ENCODE measurements at regions of chr6 and their contacts with region 1.

Region 1: GRCh38 chr6:89352278-89353117 is at the start of gene UBE2J1:
- DNase-seq: peak; percentile 87
- ATAC-seq: peak; percentile 81
- H3K4me3 ChIP-seq: peak within 1 kb of the TSS; percentile 72 to 99 (median 82)
- H3K4me3 Mint-ChIP-seq: peak within 1 kb of the TSS; percentile 93
- H3K27ac ChIP-seq: peak within 1 kb of the TSS; percentile 83 to 94
- H3K27ac Mint-ChIP-seq: peak within 1 kb of the TSS; percentile 95
- H3K4me1 ChIP-seq: peaks cover 73 to 74% of the 10 kb centered on the region in 2 donors
- H3K4me1 Mint-ChIP-seq: peaks cover 78% of the 10 kb centered on the region
- H3K27me3 ChIP-seq: no peaks in the 10 kb centered on the region
- H3K27me3 Mint-ChIP-seq: no peaks in the 10 kb centered on the region
- CTCF ChIP-seq: no peak
- total RNA-seq, gene UBE2J1: 28.0 and 31.1 TPM in 2 replicates

Region 2: GRCh38 chr6:87472525-87473418 is 1879.7 kb before region 1 on chr6 and contains the start of gene SLC35A1:
- CTCF ChIA-PET with region 1: no interaction called
- POLR2A ChIA-PET with region 1: no interaction called
- intact Hi-C with region 1: loop called (anchors 10 kb)
- DNase-seq: peak; percentile 93
- ATAC-seq: peak; percentile 97
- H3K4me3 ChIP-seq: peak within 1 kb of the TSS; percentile 72 to 95 (median 85)
- H3K4me3 Mint-ChIP-seq: peak within 1 kb of the TSS; percentile 99
- H3K27ac ChIP-seq: peak within 1 kb of the TSS; percentile 85 to 98
- H3K27ac Mint-ChIP-seq: peak within 1 kb of the TSS; percentile 100
- H3K4me1 ChIP-seq: peaks cover 7 to 11% of the 10 kb centered on the region in 2 donors
- H3K4me1 Mint-ChIP-seq: peaks cover 13% of the 10 kb centered on the region
- H3K27me3 ChIP-seq: peaks cover 0 to 7% (median 0%) of the 10 kb centered on the region in 4 experiments
- H3K27me3 Mint-ChIP-seq: peaks cover 9% of the 10 kb centered on the region
- CTCF ChIP-seq: peak; percentile 27
- total RNA-seq, gene SLC35A1: 15.1 and 15.6 TPM in 2 replicates

Region 3: DNA sequence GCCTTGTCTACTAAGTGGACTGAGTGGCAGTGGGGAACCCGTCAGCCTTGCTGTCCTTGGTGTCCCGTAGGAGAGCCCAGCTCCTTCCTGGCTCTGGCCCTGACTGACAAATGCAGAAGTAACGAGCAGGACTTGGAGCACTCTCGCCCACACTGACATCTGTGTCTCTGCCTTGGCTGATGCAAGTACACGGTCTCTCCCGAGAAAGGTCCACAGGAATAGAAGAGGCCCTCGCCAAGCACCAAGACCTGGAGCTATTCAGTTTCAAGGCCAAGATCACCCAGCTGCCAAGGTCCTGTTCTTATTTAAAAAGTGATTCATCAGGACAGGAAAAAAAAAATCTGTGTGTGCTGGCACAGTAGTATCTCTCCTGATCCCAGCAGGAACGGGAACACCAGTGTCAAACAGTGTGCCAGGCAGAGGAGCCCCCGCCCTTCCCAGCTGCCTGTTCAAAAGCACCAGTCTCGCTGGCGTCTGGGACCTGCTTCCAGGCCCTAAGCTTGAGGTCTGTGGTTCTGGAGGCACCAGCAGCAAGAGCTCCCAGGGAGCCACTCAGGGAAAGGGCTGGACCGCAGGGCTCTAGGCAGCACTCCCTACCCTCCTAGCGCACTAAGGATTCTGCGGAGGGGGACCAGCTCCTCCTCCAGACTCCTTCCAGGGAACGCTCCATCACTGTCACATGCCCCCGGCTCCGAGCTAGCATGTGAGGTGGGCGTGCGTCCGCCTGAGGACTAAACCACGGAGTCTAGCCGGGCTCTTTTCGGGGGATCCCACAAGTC is 765.9 kb before region 1 on chr6:
- CTCF ChIA-PET with region 1: no interaction called
- POLR2A ChIA-PET with region 1: no interaction called
- intact Hi-C with region 1: no loop called
- DNase-seq: no peak
- ATAC-seq: no peak
- H3K4me3 ChIP-seq: no peak overlapping the region
- H3K4me3 Mint-ChIP-seq: no peak overlapping the region
- H3K27ac ChIP-seq: no peak overlapping the region
- H3K27ac Mint-ChIP-seq: no peak overlapping the region
- H3K4me1 ChIP-seq: peaks cover 2 to 10% of the 10 kb centered on the region in 2 donors
- H3K4me1 Mint-ChIP-seq: peaks cover 2% of the 10 kb centered on the region
- H3K27me3 ChIP-seq: peaks cover 0 to 3% (median 0%) of the 10 kb centered on the region in 4 experiments
- H3K27me3 Mint-ChIP-seq: peaks cover 13% of the 10 kb centered on the region
- CTCF ChIP-seq: no peak

Region 4: DNA sequence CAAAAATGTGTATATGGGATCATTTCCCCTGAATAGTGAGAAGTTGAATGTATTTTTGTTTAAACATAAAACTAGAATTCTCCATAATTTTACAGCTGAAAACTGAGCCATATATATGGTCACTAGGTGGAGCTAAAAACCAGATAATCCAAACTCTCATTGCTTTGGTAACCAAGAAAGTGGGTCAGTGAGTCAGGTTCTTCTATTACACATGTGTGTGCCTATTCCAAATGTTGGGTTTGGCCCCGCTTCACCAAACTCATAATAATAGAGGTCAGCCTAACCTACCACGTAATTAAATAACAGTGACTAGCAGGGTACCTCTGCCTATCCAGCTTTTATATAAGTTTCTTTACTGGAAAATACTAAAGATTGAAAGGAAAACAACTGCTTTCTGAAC is 369.8 kb before region 1 on chr6:
- CTCF ChIA-PET with region 1: interaction called, 11 read pairs
- POLR2A ChIA-PET with region 1: no interaction called
- intact Hi-C with region 1: no loop called
- DNase-seq: peak; percentile 73
- ATAC-seq: peak; percentile 63
- H3K4me3 ChIP-seq: no peak overlapping the region
- H3K4me3 Mint-ChIP-seq: no peak overlapping the region
- H3K27ac ChIP-seq: no peak overlapping the region
- H3K27ac Mint-ChIP-seq: no peak overlapping the region
- H3K4me1 ChIP-seq: no peaks in the 10 kb centered on the region
- H3K4me1 Mint-ChIP-seq: no peaks in the 10 kb centered on the region
- H3K27me3 ChIP-seq: no peaks in the 10 kb centered on the region
- H3K27me3 Mint-ChIP-seq: no peaks in the 10 kb centered on the region
- CTCF ChIP-seq: peak; percentile 88

Region 5: GRCh38 chr6:89308525-89309395 is 43.7 kb before region 1 on chr6:
- CTCF ChIA-PET with region 1: no interaction called
- POLR2A ChIA-PET with region 1: no interaction called
- intact Hi-C with region 1: no loop called
- DNase-seq: no peak
- ATAC-seq: no peak
- H3K4me3 ChIP-seq: no peak overlapping the region
- H3K4me3 Mint-ChIP-seq: no peak overlapping the region
- H3K27ac ChIP-seq: no peak overlapping the region
- H3K27ac Mint-ChIP-seq: no peak overlapping the region
- H3K4me1 ChIP-seq: no peaks in the 10 kb centered on the region
- H3K4me1 Mint-ChIP-seq: peaks cover 5% of the 10 kb centered on the region
- H3K27me3 ChIP-seq: no peaks in the 10 kb centered on the region
- H3K27me3 Mint-ChIP-seq: no peaks in the 10 kb centered on the region
- CTCF ChIP-seq: no peak

Region 6: GRCh38 chr6:89371849-89372505 is 19.5 kb after region 1 on chr6:
- CTCF ChIA-PET with region 1: interaction called, 141 read pairs
- POLR2A ChIA-PET with region 1: interaction called, 7 read pairs
- intact Hi-C with region 1: loop called (anchors 1 kb)
- DNase-seq: peak; percentile 90
- ATAC-seq: peak; percentile 88
- H3K4me3 ChIP-seq: no peak overlapping the region
- H3K4me3 Mint-ChIP-seq: peak overlapping the region; percentile 18
- H3K27ac ChIP-seq: peak overlapping the region; percentile 17 to 18
- H3K27ac Mint-ChIP-seq: peak overlapping the region; percentile 53
- H3K4me1 ChIP-seq: peaks cover 23 to 37% of the 10 kb centered on the region in 2 donors
- H3K4me1 Mint-ChIP-seq: peaks cover 39% of the 10 kb centered on the region
- H3K27me3 ChIP-seq: no peaks in the 10 kb centered on the region
- H3K27me3 Mint-ChIP-seq: no peaks in the 10 kb centered on the region
- CTCF ChIP-seq: peak; percentile 98

Region 7: DNA sequence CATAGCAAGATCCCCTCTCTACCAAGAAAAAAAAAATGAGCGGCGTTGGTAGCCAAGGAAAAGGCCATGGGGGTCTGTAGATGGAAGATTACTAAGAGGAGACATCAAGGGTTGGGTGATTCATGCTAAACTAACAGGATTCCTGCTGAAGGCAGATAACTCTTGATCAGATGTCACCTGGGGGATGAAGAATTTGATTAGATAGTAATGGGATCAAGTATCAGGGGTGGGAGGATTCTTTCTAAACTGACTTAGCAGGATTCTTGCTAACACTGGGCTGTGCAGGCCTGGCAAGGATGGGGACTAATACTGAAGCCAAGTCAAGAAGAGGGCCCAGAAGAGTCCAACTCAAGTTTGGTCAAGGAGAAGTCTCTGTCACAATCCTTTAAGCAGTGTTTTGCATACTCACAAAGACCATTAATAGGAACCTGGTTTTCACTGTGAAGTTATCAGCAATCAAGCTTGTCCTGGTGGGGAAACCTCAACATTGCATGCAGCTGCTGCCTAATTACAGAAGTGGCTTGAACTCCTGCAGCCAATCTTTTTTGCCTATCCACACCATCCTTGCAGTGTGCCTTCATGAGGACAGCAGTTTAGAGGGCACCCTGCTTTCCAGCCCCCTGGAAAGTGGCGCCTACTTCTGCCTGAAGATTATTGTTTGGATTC is 141.8 kb after region 1 on chr6:
- CTCF ChIA-PET with region 1: no interaction called
- POLR2A ChIA-PET with region 1: no interaction called
- intact Hi-C with region 1: no loop called
- DNase-seq: no peak
- ATAC-seq: no peak
- H3K4me3 ChIP-seq: no peak overlapping the region
- H3K4me3 Mint-ChIP-seq: no peak overlapping the region
- H3K27ac ChIP-seq: no peak overlapping the region
- H3K27ac Mint-ChIP-seq: no peak overlapping the region
- H3K4me1 ChIP-seq: no peaks in the 10 kb centered on the region
- H3K4me1 Mint-ChIP-seq: no peaks in the 10 kb centered on the region
- H3K27me3 ChIP-seq: peaks cover 0 to 3% (median 0%) of the 10 kb centered on the region in 4 experiments
- H3K27me3 Mint-ChIP-seq: peaks cover 13% of the 10 kb centered on the region
- CTCF ChIP-seq: no peak

Region 8: DNA sequence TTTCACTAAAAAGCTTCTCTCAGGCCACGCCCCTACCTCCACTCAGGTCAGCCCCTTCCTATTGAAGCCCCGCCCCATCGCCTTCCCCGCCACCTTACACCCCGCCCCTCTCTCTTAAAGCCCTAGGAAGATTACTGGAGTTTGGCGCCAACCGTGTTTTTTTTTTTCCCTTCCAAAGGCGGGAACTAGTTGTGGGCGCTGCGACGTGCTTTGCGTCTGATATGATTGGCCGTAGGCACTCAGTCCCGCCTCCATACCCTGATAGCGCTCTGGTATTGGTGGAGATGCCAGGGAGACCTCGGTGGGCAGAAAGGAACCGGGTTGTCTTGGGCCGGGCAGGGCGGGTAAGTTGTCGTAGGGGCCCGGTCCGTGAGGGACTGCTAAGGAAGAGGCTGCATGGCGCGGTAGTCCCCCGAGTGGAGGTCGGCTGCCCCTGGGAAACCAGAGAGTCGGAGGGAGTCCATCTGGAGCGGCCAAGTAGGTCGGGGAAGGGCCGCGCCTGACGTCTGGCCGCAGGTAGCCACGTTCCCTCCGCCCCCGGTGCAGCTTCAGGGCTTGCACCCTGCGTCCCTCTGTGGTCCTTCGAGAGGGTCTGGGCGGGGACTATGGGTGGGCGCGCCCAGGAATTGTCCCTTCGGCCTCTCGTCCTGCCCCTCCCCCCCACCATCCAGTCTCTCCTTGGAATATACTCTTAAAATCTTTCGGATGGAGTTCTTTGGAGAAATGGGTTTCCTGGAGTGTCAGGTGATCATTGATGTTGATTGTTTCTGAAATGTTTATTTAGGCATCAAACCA is 477.3 kb after region 1 on chr6 and contains the start of gene CASP8AP2:
- CTCF ChIA-PET with region 1: no interaction called
- POLR2A ChIA-PET with region 1: interaction called, 4 read pairs
- intact Hi-C with region 1: loop called (anchors 1 kb)
- DNase-seq: peak; percentile 98
- ATAC-seq: peak; percentile 93
- H3K4me3 ChIP-seq: peak within 1 kb of the TSS; percentile 75 to 97 (median 79)
- H3K4me3 Mint-ChIP-seq: peak within 1 kb of the TSS; percentile 99
- H3K27ac ChIP-seq: peak within 1 kb of the TSS; percentile 62 to 83
- H3K27ac Mint-ChIP-seq: peak within 1 kb of the TSS; percentile 95
- H3K4me1 ChIP-seq: peaks cover 14 to 28% of the 10 kb centered on the region in 2 donors
- H3K4me1 Mint-ChIP-seq: peaks cover 29% of the 10 kb centered on the region
- H3K27me3 ChIP-seq: no peaks in the 10 kb centered on the region
- H3K27me3 Mint-ChIP-seq: no peaks in the 10 kb centered on the region
- CTCF ChIP-seq: no peak
- total RNA-seq, gene CASP8AP2: 30.6 and 32.1 TPM in 2 replicates

Region 9: DNA sequence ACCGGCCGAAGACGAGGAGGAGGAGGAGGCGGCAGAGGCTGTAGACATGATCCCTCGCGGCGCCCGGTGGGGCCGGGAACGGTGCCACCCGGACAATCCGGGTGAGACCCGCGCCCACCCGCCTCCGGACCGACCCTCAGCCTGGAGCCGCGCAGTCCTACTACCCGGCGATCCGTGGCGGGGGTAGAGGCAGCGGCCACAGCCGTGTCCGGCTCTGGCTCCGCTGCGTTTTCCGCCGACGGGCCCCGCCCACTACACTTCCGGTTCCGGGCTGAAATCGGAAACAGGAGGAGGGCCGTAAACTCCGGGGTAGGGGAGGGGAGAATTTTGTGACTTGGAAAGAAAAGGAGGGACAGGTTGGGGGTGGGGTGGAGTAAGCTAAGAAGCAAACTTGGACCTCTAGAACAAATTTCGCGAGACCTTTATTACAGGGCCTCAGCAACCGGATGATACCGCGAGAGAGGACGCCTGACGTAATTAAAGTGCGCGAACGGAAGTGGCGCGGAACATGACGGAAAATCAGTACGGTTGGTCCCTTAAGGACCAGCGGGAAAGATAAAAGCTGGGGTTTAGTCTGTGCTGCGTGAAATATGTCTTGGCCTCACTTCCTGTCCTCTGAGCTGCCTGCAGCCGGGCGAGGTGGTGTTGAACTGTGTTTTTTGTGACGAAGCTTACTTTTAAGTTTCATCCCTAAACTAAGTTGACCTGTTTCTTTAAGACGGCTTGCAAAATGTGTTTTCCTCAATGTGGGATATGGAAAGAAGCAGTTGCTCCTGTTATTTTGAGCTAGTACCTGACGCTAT is 1234.5 kb after region 1 on chr6 and contains the start of gene MAP3K7:
- CTCF ChIA-PET with region 1: no interaction called
- POLR2A ChIA-PET with region 1: no interaction called
- intact Hi-C with region 1: loop called (anchors 5 kb)
- DNase-seq: peak; percentile 97
- ATAC-seq: peak; percentile 85
- H3K4me3 ChIP-seq: peak within 1 kb of the TSS; percentile 91 to 98 (median 96)
- H3K4me3 Mint-ChIP-seq: peak within 1 kb of the TSS; percentile 98
- H3K27ac ChIP-seq: peak within 1 kb of the TSS; percentile 90 to 100
- H3K27ac Mint-ChIP-seq: peak within 1 kb of the TSS; percentile 100
- H3K4me1 ChIP-seq: peaks cover 15 to 30% of the 10 kb centered on the region in 2 donors
- H3K4me1 Mint-ChIP-seq: peaks cover 41% of the 10 kb centered on the region
- H3K27me3 ChIP-seq: peaks cover 0 to 6% (median 2%) of the 10 kb centered on the region in 4 experiments
- H3K27me3 Mint-ChIP-seq: peaks cover 12% of the 10 kb centered on the region
- CTCF ChIP-seq: no peak
- total RNA-seq, gene MAP3K7: 32.8 and 34.4 TPM in 2 replicates